Mammary epithelial cell (primary cell): ENCODE measurements at regions of chr3 and their contacts with region 1.

Region 1: DNA sequence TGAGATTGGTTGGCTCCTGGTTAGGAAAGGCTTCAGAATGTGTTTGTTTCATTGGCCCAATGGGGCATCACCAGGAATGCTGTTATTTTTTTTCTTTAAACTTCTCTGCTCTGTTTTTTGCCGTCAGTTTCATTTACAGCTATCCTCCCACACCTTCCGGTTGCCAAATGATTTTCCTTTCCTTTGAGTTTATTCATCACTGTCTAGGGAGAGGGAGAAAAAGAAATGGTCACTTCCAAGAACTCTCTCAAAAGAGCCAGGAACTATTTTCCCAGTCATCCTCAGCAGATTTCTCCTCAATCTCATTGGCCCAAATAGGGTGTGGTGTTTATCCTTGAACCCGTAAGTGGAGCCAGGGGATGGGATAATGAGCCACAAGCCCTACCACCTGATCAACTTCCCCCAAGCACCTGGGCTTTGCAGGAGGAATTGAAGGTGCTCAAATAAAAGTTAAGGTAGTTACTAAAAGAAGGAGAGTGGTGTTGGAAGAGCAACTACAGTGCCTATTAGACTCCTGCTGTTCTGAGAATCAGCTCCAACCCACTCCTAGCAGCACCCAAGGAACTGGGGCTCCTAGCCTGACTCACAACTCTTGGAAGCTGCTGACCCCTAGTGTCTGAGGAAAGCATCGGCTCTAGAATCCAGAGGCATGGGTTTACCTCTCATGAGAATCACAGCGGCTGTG is 183.8 kb upstream of the IL12A start:
- DNase-seq: peak; percentile 79
- H3K4me3 ChIP-seq: no peak overlapping the region
- H3K27ac ChIP-seq: no peak overlapping the region
- H3K4me1 ChIP-seq: peaks cover 27% of the 10 kb centered on the region
- H3K27me3 ChIP-seq: no peaks in the 10 kb centered on the region
- CTCF ChIP-seq: peak; percentile 96 to 98

Region 2: GRCh38 chr3:159616212-159616825 is 188.5 kb before region 1 on chr3:
- CTCF ChIA-PET with region 1: no interaction called
- dilution Hi-C with region 1: no loop called
- in situ Hi-C with region 1: loop called (anchors 5 kb)
- intact Hi-C with region 1: loop called (anchors 1 kb)
- DNase-seq: peak; percentile 48
- H3K4me3 ChIP-seq: no peak overlapping the region
- H3K27ac ChIP-seq: no peak overlapping the region
- H3K4me1 ChIP-seq: peaks cover 14% of the 10 kb centered on the region
- H3K27me3 ChIP-seq: no peaks in the 10 kb centered on the region
- CTCF ChIP-seq: peak; percentile 49 to 70

Region 3: DNA sequence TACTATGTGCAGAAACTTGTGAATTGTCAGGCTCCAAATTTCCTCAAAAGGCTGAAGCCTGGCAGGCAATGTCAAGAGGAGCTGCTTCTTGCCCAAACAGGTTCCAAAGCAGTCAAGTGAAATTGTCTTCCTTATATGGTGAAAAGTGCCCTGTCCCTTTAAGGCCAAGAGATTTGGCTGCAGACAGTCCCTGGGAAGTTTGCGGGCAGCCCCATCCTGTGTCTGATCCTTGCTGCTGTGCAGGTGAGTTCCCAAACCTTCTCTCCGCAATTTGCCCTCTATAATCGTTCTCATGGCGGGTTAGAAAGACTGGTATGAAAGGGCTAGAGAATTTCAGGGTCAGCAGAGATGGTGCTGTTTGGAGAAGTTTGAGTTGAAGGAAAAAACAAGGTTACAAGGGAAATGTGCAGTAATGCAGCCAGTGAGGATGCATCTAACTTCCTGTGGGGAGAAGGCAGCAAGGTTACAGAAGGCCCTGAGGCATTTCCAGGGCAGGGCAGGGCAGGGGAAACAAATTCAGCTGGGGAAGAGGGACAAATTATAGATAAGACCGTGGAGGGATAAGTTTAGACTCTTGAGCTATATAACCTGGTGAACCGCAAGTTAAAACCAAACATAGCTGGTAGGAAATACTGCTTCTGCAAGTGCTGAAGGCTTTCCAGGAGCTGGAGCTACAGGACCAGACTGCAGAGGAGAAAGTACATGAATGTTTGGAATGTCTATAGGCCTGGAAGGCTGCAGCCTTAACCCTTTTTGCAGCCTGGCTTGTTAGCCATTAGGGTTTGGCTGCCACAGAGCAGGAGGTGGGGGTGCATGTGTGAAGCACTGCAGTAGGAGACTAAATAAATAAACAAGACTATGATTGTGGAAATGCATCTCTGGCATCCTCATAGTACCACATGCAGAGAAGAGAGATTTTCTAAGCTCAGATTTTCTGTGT is 72.4 kb before region 1 on chr3:
- CTCF ChIA-PET with region 1: no interaction called
- dilution Hi-C with region 1: loop called (anchors 5 kb)
- in situ Hi-C with region 1: no loop called
- intact Hi-C with region 1: loop called (anchors 2 kb)
- DNase-seq: peak; percentile 82
- H3K4me3 ChIP-seq: peak overlapping the region; percentile 38 to 52 (median 42)
- H3K27ac ChIP-seq: no peak overlapping the region
- H3K4me1 ChIP-seq: peaks cover 19% of the 10 kb centered on the region
- H3K27me3 ChIP-seq: no peaks in the 10 kb centered on the region
- CTCF ChIP-seq: peak; percentile 16 to 42

Region 4: GRCh38 chr3:159739886-159740453 is 64.9 kb before region 1 on chr3:
- CTCF ChIA-PET with region 1: no interaction called
- dilution Hi-C with region 1: loop called (anchors 5 kb)
- in situ Hi-C with region 1: no loop called
- intact Hi-C with region 1: no loop called
- DNase-seq: no peak
- H3K4me3 ChIP-seq: no peak overlapping the region
- H3K27ac ChIP-seq: no peak overlapping the region
- H3K4me1 ChIP-seq: no peaks in the 10 kb centered on the region
- H3K27me3 ChIP-seq: no peaks in the 10 kb centered on the region
- CTCF ChIP-seq: no peak

Region 5: DNA sequence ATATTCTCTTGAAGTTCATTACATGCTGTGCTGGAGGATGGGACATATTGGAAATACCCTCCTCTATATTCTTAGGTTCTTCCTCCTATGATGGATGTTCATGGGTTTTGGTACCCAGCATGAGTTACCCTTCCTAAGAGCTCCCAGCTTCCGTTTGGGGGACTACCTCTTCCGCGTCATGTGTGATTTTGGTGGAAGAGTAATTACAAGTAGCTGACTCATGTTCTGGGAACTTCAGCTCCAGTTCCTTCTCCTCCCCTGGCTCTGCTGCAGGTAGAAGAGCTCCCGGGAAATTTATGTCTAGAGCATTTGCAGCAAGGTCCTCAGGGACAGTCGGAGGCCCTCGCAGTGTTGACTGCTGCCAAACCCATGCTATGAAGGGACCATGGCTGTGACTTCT is 25.0 kb before region 1 on chr3:
- CTCF ChIA-PET with region 1: interaction called, 11 read pairs
- dilution Hi-C with region 1: no loop called
- in situ Hi-C with region 1: no loop called
- intact Hi-C with region 1: loop called (anchors 1 kb)
- DNase-seq: no peak
- H3K4me3 ChIP-seq: no peak overlapping the region
- H3K27ac ChIP-seq: no peak overlapping the region
- H3K4me1 ChIP-seq: peaks cover 39% of the 10 kb centered on the region
- H3K27me3 ChIP-seq: no peaks in the 10 kb centered on the region
- CTCF ChIP-seq: no peak

Region 6: DNA sequence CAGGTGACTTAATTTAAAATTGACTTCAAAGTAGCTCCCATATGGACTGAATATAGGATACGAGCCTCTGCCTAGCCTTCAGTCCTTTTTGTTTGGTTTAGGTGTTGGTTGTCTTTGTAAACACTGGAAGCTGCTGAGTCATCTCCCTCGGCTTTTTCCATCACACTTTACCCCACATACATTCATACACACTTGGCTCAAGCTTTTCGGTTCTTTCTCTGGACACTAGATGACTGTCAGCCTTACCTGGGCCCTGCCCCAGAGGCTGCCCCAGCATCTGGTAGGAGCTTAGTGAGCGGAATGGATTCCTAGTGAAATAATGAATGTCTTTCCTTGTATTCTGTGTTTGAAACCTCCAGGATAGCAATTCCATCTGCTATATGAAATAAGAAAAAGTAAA is 17.7 kb before region 1 on chr3:
- CTCF ChIA-PET with region 1: interaction called, 8 read pairs
- dilution Hi-C with region 1: no loop called
- in situ Hi-C with region 1: no loop called
- intact Hi-C with region 1: loop called (anchors 1 kb)
- DNase-seq: peak; percentile 94
- H3K4me3 ChIP-seq: no peak overlapping the region
- H3K27ac ChIP-seq: peak overlapping the region; percentile 88
- H3K4me1 ChIP-seq: peaks cover 76% of the 10 kb centered on the region
- H3K27me3 ChIP-seq: no peaks in the 10 kb centered on the region
- CTCF ChIP-seq: no peak

Region 7: GRCh38 chr3:160003520-160004128 is 198.8 kb after region 1 on chr3:
- CTCF ChIA-PET with region 1: no interaction called
- dilution Hi-C with region 1: no loop called
- in situ Hi-C with region 1: no loop called
- intact Hi-C with region 1: loop called (anchors 2 kb)
- DNase-seq: peak; percentile 41
- H3K4me3 ChIP-seq: no peak overlapping the region
- H3K27ac ChIP-seq: no peak overlapping the region
- H3K4me1 ChIP-seq: no peaks in the 10 kb centered on the region
- H3K27me3 ChIP-seq: no peaks in the 10 kb centered on the region
- CTCF ChIP-seq: peak; percentile 44 to 69

Region 8: DNA sequence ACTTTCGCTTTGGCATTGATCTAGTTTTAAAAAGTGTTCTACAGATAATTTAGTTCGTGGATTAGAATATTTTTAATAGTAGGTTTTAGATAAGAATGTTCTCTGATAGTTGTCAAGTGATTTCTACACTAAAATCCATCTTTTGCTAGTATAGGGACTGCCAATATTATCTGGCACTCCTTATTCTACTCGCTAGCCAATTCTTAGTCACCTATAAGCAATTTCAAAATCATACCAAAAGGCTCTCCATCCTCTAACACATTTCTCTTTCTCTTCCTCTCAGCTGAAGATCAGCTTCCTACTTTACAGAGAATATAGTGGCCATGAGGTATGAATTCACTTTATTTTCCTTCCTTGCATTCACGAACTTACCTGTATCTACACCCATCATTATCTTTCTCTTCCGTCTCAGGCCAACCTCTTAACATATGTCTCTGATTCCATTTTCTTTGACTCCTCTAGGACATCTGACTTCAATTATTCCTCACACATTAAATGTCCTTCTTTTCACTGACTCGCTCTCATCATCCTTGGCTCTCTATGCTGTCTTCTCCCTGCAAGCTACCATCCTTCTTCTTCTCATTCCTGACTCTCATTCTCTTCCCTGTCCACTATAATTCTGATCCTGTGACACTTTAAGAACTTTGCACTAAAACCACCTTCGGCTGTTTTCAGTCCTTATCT is 455.9 kb after region 1 on chr3:
- CTCF ChIA-PET with region 1: no interaction called
- dilution Hi-C with region 1: no loop called
- in situ Hi-C with region 1: no loop called
- intact Hi-C with region 1: no loop called
- DNase-seq: no peak
- H3K4me3 ChIP-seq: no peak overlapping the region
- H3K27ac ChIP-seq: no peak overlapping the region
- H3K4me1 ChIP-seq: no peaks in the 10 kb centered on the region
- H3K27me3 ChIP-seq: no peaks in the 10 kb centered on the region
- CTCF ChIP-seq: no peak